ENCODE measurements at regions of chr6 and their contacts with region 1.

Region 1: DNA sequence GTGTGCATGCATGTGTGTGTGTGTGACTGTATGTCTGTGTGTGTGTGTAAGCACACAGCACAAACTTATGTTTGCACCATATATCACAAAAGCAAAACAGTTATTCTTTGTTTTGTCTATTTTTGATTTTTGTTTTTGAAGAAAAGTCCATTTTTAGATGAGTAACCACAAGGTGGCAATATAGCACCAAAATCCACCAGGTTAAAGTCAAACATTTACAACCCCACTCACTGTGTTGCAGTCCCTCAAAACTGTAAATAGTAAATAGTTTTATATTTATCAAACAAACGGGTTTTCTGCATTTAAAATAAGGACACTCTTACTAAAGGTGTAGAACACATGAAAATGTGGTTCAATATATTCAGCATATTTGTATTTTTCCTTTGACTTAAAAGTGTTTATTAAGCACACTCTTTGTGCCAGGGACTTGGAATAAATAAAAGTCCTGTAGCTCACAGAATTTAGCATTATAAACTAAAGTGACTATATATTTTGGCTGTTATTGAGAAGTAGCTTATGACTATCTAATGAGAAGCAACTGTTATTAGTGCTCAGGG is 118.5 kb downstream of the GFRAL start:
- DNase-seq: peak; percentile 3
- H3K4me3 Mint-ChIP-seq: no peak overlapping the region
- H3K27ac Mint-ChIP-seq: no peak overlapping the region
- H3K4me1 Mint-ChIP-seq: no peaks in the 10 kb centered on the region
- H3K27me3 Mint-ChIP-seq: no peaks in the 10 kb centered on the region
- CTCF ChIP-seq: peak; percentile 52

Region 2: GRCh38 chr6:55276745-55277530 is 168.8 kb before region 1 on chr6:
- CTCF ChIA-PET with region 1: no interaction called
- intact Hi-C with region 1: loop called (anchors 1 kb)
- DNase-seq: peak; percentile 43
- H3K4me3 Mint-ChIP-seq: no peak overlapping the region
- H3K27ac Mint-ChIP-seq: no peak overlapping the region
- H3K4me1 Mint-ChIP-seq: no peaks in the 10 kb centered on the region
- H3K27me3 Mint-ChIP-seq: no peaks in the 10 kb centered on the region
- CTCF ChIP-seq: peak; percentile 56

Region 3: DNA sequence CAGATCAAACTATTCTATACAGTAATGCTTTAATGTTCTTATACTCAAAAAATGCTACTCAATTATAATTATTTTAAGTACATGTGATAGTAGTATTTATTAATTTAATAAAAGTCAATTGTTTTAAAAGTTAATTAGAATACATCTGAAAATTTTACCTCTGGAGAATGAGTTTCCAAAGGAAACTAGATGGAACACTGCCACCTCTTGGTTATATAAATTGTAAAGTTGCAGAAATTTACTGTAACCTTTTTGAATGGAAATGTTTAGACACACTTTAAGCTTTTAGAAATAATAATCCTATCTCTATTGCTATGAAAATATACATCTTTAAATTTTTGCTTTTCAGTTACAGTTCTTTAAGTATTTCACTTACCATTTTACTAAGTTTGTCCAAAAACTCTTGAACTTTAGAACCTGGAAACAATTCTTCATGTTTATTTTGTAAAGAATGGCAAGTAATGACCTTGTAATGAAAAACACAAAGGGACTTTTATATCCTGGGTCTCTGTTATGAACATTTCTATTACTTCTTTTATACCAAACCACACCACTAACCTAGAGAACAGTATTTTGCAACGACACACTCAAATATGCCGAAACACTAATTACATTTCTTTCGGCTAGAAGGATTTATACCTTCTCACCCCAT is 440.6 kb after region 1 on chr6:
- CTCF ChIA-PET with region 1: no interaction called
- intact Hi-C with region 1: loop called (anchors 2 kb)
- DNase-seq: no peak
- H3K4me3 Mint-ChIP-seq: no peak overlapping the region
- H3K27ac Mint-ChIP-seq: no peak overlapping the region
- H3K4me1 Mint-ChIP-seq: peaks cover 18% of the 10 kb centered on the region
- H3K27me3 Mint-ChIP-seq: no peaks in the 10 kb centered on the region
- CTCF ChIP-seq: no peak

Region 4: DNA sequence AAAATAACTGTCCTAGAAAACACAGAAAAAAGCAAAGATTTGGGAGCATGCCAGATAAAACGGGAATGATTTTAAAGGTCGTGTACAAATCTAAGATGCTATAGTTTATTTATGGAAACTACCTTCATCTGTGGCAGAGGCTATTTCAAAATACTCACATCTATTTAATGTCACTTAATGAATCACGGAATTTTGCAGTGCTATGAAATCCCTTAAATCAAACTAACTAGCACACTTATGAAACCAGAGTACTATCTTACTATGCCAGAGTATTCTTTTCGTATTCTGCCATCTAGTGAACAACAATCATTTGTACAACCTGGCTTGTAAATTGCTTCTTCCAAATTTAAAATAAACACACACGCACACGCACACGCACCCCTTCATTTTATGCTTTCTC is 507.6 kb after region 1 on chr6:
- CTCF ChIA-PET with region 1: no interaction called
- intact Hi-C with region 1: loop called (anchors 1 kb)
- DNase-seq: no peak
- H3K4me3 Mint-ChIP-seq: no peak overlapping the region
- H3K27ac Mint-ChIP-seq: no peak overlapping the region
- H3K4me1 Mint-ChIP-seq: peaks cover 14% of the 10 kb centered on the region
- H3K27me3 Mint-ChIP-seq: no peaks in the 10 kb centered on the region
- CTCF ChIP-seq: no peak

Region 5: DNA sequence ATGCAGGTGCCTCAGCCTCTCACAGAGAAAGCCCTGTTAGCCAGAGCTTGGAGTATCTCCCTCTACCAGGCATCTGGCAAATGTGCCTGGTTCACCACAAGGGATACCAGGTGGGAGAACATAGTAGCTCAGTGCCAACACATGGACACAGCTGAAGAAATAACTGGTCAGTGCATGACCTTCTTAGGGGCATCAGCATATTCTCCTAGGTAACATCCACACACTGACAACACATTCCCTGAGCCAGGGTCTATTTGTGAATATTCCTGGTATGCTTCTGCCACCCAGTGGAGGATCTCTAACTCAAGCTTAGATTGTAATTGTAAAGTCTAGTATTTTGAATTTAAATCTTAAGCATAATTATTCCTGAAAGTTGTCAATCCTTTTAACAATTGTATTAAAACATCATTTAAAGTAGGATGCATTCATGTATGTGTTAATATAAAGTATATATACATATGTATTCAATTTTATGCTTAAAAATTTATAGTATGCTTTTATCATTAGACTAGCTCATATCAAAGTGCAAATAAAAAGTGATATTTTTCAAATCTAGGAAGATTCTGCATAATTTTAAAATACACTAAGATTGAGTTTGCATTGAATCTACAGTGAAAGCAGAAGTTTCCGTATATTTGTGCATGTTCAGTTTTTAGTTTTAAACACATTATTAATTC is 846.9 kb after region 1 on chr6:
- CTCF ChIA-PET with region 1: no interaction called
- intact Hi-C with region 1: loop called (anchors 10 kb)
- DNase-seq: peak; percentile 49
- H3K4me3 Mint-ChIP-seq: no peak overlapping the region
- H3K27ac Mint-ChIP-seq: no peak overlapping the region
- H3K4me1 Mint-ChIP-seq: peaks cover 19% of the 10 kb centered on the region
- H3K27me3 Mint-ChIP-seq: no peaks in the 10 kb centered on the region
- CTCF ChIP-seq: peak; percentile 64